ENCODE measurements at regions of chr2 and their contacts with region 1.

Region 1: DNA sequence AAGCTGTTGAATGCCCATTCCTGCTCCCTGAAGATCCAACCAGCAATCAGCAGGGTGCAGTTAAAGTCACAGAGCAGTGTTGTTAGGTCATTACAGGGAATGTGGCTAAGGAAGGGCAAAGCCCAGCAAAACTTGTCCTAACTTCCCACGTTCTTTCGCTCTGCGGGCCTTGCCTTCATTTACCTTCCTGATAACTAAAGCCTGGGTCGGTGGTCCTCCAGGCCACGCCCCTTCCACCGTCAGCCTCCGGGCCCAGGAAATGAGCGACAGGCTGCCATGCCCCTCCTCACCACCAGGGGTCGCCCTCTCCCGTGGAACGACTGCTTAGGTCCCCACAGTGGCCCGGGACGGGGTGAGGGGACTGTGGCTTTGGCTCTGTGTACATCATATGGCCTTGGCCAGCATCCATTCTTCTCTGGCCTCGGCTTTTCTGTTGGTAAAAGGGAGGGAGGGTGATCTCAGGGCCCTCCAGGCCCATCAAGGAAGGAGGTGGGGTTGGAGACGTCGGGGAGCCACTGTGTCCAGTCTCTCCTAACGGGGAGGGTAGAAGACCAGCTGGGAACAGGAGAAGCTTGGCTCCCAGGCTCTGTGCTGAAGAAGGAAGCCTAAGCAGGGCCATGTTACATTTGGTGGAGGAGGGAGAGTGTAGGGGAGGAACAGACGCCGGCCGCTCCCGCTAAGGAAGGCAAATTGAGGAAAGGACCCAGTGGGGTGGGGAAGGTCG is 2.2 kb downstream of the SH2D6 start:
- DNase-seq: peak; percentile 94
- H3K4me3 Mint-ChIP-seq: peak overlapping the region; percentile 61
- H3K27ac Mint-ChIP-seq: no peak overlapping the region
- H3K4me1 Mint-ChIP-seq: peaks cover 17% of the 10 kb centered on the region
- H3K27me3 Mint-ChIP-seq: no peaks in the 10 kb centered on the region

Region 2: DNA sequence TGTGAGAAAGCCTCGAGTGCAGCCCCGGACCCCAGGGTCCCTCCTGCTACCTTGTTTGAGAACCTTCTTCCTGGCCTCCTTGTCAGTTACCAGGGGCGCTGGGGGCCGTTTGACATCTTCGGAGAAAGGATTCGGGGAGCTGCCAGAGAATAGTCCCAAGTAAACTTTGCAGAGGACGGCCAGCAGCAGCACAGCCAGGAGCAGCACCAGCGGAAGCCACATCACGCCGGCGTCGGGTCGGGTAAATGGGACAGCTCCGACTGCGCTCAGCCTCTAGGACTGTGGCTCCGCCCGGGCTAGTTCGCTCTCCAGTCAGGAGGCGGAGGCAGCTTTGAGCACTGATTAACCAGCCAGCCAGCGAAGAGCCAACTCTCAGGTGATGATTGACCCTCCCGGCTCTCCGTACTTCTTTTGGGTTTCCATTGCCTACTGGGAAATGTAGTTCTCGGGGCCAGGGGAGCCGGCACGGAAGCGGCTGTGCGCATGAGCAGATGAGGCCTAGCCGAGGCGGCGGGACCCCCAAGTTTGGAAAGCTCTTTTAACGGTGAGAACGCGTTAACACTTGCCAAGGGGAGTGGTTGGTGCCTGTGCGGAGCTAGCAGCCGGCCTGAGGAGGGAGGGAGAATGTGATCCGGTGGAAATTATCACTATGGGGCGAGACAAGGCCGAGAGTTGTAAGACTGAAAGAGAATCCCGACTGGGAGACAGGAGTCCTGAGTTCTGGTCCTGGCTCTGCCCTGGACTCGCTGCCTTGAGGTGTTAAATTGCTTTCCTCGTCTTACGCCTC is 66.2 kb before region 1 on chr2 and contains the starts of genes ELMOD3 and RETSAT:
- CTCF ChIA-PET with region 1: interaction called, 9 read pairs
- intact Hi-C with region 1: loop called (anchors 1 kb)
- DNase-seq: peak; percentile 99
- H3K4me3 Mint-ChIP-seq: peak within 1 kb of the TSS; percentile 99
- H3K27ac Mint-ChIP-seq: peak within 1 kb of the TSS; percentile 96
- H3K4me1 Mint-ChIP-seq: peaks cover 36% of the 10 kb centered on the region
- H3K27me3 Mint-ChIP-seq: no peaks in the 10 kb centered on the region
- total RNA-seq, gene ELMOD3: 14.8 to 15.4 TPM
- total RNA-seq, gene RETSAT: 19.7 to 24.5 TPM

Region 3: DNA sequence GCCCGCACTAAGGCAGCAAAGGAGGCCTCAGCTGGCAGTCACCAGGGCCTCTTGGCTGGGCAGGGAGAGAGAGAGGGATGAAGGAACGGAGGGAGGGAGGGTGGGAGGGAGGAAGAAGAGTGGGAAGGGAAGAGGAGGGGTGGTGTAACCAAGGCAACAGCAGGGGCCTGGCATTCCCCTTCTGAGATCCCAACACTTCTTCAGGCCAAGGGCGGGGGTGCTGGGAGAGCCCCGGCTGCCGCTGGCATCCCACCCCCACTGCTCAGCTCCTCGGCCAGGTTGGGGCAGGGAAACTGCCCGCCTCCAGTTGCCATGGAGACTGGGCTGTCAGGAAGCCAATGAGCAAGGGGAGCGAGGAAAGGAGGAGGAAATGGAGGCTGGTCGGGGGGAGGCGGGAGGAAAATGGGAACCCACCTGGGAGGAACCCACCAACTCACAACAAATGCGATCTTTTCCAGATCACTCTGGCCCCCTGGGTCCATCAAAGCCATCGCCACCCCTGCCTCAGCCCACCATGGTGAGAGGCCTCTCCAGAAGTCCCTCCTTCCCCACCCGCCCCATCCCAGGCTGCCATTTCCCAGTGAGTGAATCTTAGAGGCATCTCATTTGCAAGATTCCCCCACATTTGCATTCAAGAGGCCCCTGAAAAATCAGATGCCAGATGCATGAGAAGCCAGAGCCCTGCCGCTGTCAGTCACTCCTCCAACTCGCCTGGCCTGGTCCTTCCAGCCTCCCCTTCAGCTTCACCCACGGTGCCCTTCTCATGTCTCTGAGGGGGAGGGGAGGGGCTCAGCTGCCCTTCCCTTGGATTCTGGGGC is 10.3 kb after region 1 on chr2:
- CTCF ChIA-PET with region 1: interaction called, 22 read pairs
- intact Hi-C with region 1: no loop called
- DNase-seq: no peak
- H3K4me3 Mint-ChIP-seq: no peak overlapping the region
- H3K27ac Mint-ChIP-seq: no peak overlapping the region
- H3K4me1 Mint-ChIP-seq: no peaks in the 10 kb centered on the region
- H3K27me3 Mint-ChIP-seq: no peaks in the 10 kb centered on the region

Region 4: GRCh38 chr2:85545780-85546240 is 125.1 kb after region 1 on chr2:
- CTCF ChIA-PET with region 1: interaction called, 282 read pairs
- intact Hi-C with region 1: no loop called
- DNase-seq: no peak
- H3K4me3 Mint-ChIP-seq: no peak overlapping the region
- H3K27ac Mint-ChIP-seq: peak overlapping the region; percentile 69
- H3K4me1 Mint-ChIP-seq: peaks cover 33% of the 10 kb centered on the region
- H3K27me3 Mint-ChIP-seq: no peaks in the 10 kb centered on the region

Region 5: GRCh38 chr2:85611705-85612587 is 191.2 kb after region 1 on chr2 and contains the start of gene C2orf68:
- CTCF ChIA-PET with region 1: no interaction called
- intact Hi-C with region 1: loop called (anchors 1 kb)
- DNase-seq: peak; percentile 93
- H3K4me3 Mint-ChIP-seq: peak within 1 kb of the TSS; percentile 98
- H3K27ac Mint-ChIP-seq: peak within 1 kb of the TSS; percentile 94
- H3K4me1 Mint-ChIP-seq: peaks cover 25% of the 10 kb centered on the region
- H3K27me3 Mint-ChIP-seq: no peaks in the 10 kb centered on the region
- total RNA-seq, gene C2orf68: 29.3 to 31.0 TPM

Region 6: DNA sequence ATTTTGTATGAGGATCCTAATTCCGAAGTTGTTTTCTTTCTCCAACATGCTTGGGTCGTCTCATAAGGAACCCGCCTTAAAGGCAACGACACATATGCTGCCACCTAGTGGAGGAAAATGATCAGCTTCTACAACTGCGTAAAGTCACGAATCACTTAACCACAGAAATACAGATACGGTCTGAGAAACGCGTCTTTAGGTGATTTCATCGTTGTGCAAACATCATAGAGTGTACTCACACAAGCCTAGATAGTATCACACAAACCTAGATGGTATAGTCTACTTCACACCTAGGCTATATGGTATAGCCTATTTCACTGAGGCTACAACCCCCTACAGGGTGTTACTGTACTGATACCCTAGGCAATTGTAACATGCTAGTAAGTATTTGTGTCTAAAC is 286.6 kb after region 1 on chr2:
- CTCF ChIA-PET with region 1: interaction called, 8 read pairs
- intact Hi-C with region 1: loop called (anchors 1 kb)
- DNase-seq: peak; percentile 79
- H3K4me3 Mint-ChIP-seq: no peak overlapping the region
- H3K27ac Mint-ChIP-seq: no peak overlapping the region
- H3K4me1 Mint-ChIP-seq: peaks cover 12% of the 10 kb centered on the region
- H3K27me3 Mint-ChIP-seq: peaks cover 6% of the 10 kb centered on the region